AG04449 (cell line): ENCODE measurements at regions of chr7 and their contacts with region 1.

Region 1: DNA sequence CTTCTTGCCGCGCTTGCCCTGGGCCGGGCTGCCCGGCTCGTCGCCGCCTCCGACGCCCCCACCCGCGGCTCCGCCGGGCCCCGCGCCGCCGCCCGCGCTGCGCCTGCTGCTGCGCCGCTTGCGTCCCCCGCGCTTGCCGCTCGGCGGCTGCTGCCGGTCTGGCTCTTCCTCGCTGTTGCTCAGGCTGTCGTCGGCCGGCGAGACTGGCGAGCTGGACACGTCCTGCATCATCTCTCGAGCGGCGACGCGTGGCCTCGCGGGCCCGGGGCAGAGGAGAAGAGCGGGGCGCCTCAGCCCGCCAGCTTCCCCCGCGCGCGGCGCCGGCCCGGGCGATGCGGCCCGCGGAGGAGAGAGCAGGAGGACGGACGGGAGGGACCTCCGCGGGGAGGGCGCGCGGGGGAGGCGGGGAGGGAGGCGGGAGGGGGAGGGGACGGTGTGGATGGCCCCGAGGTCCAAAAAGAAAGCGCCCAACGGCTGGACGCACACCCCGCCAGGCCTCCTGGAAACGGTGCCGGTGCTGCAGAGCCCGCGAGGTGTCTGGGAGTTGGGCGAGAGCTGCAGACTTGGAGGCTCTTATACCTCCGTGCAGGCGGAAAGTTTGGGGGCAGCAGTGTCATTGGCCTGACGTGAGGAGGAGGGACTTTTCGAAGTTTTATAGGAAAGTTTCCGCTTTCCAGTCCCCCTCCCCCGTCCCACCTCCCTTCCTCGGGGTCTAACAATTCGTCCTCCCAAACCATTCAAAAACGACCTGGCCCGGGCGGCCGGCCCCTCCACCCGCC is at the start of gene TWIST1:
- DNase-seq: peak; percentile 95
- H3K4me3 ChIP-seq: peak within 1 kb of the TSS; percentile 99
- CTCF ChIP-seq: no peak

Region 2: GRCh38 chr7:18693406-18693805 is 423.9 kb before region 1 on chr7:
- CTCF ChIA-PET with region 1: interaction called, 23 read pairs
- POLR2A ChIA-PET with region 1: interaction called, 5 read pairs
- DNase-seq: peak; percentile 77
- H3K4me3 ChIP-seq: no peak overlapping the region
- CTCF ChIP-seq: peak; percentile 71

Region 3: GRCh38 chr7:19177269-19177668 is 60.0 kb after region 1 on chr7:
- CTCF ChIA-PET with region 1: no interaction called
- POLR2A ChIA-PET with region 1: no interaction called
- DNase-seq: no peak
- H3K4me3 ChIP-seq: no peak overlapping the region
- CTCF ChIP-seq: no peak

Region 4: DNA sequence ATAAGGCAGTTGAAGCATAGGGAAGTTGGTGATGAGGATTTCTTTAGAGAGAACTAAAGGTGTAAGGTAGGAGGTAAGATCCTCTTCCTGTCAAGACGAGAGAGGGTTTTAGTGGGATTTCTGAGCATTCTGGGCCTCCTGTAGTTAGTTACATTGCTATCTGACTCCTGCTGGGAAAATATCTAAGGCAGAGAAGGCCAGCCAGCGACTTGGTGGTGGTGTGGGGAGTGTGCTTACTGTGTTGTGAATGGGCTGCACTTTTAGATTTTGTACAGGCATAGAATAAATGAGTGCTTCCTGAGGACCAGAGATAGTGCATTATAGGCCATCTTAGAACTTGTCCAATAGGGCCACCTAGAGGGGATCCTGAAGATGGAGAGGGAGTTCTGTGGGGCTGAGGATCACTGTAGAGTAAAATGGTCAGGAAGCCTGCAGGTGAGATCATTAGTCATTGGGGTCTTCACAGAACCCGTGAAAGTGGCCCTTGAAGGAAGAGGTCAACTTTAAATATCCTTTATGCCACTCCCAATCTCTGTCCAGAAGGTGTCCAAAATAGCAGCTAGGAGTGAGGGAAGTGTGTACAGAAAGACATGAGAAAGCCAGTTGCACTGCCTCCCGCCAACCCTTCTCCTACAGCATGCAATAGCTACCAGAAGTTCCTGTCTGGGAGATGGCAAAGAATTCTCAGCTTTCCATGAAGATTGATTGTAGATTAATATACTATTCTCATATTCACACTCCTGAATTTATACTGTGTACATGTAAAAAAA is 324.9 kb after region 1 on chr7:
- CTCF ChIA-PET with region 1: interaction called, 104 read pairs
- POLR2A ChIA-PET with region 1: no interaction called
- DNase-seq: peak; percentile 21
- H3K4me3 ChIP-seq: no peak overlapping the region
- CTCF ChIP-seq: peak; percentile 77

Region 5: GRCh38 chr7:19491821-19492452 is 374.7 kb after region 1 on chr7:
- CTCF ChIA-PET with region 1: interaction called, 88 read pairs
- POLR2A ChIA-PET with region 1: no interaction called
- DNase-seq: peak; percentile 5
- H3K4me3 ChIP-seq: no peak overlapping the region
- CTCF ChIP-seq: peak; percentile 47

Region 6: DNA sequence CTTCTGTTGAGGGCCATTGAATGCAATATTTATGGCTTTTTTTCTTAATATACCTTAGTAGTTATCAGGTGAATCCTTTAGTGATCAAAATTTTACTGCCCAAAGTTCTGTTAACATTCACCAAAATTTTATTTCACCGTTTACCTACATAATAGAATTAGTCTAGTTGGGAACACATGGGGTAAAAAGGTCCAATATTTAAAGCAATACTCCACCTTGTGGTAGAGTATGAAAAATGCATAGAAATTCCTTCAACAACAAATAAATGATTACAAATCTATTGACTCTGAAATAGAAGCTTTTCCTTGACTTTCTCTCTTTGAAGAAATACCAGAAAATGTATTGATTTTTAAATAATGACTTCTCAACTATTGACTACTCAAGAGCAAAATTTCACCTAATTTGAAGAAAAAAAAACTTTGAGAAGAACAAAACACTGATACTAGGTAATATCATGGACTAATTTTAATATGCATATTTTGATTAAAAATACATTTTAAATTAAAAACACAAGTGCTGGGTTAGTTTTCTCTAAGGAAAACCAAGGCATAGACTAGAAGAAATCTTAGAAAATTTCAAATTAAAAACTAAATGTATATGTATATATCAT is 548.2 kb after region 1 on chr7:
- CTCF ChIA-PET with region 1: interaction called, 18 read pairs
- POLR2A ChIA-PET with region 1: no interaction called
- DNase-seq: no peak
- H3K4me3 ChIP-seq: no peak overlapping the region
- CTCF ChIP-seq: peak; percentile 3